ENCODE measurements at regions of chr5 and their contacts with region 1.

Region 1: GRCh38 chr5:52948418-52949076 is 40.6 kb upstream of the ITGA2 start:
- DNase-seq: peak; percentile 63 to 82 (median 70)
- ATAC-seq: peak; percentile 99
- H3K4me3 ChIP-seq: no peak overlapping the region
- H3K27ac ChIP-seq: no peak overlapping the region
- H3K4me1 ChIP-seq: no peaks in the 10 kb centered on the region
- H3K27me3 ChIP-seq: no peaks in the 10 kb centered on the region
- CTCF ChIP-seq: peak; percentile 47 to 90 (median 81)
- POLR2A ChIP-seq: no peak

Region 2: GRCh38 chr5:53041071-53041692 is 92.6 kb after region 1 on chr5:
- intact Hi-C with region 1: no loop called
- DNase-seq: no peak
- ATAC-seq: no peak
- H3K4me3 ChIP-seq: no peak overlapping the region
- H3K27ac ChIP-seq: no peak overlapping the region
- H3K4me1 ChIP-seq: peaks cover 10% of the 10 kb centered on the region
- H3K27me3 ChIP-seq: no peaks in the 10 kb centered on the region
- CTCF ChIP-seq: no peak
- POLR2A ChIP-seq: no peak

Region 3: DNA sequence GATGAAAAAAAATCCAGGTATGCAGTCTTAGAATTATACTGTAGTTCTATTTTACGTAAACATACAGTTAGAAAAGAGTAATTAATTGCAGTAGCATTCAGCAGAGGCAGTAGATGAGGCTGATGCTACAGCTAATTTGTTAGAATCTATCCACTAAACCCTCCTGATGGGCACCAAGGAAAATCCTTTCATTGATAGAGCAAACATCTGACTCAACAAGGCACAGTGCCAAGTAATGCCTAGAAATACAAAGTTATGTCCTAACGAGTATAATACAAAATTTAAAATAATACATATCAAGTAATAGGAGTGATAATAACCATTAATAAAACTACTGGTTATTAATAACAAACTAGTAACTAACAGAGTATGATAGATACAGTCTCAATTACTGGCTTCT is 152.1 kb after region 1 on chr5:
- intact Hi-C with region 1: loop called (anchors 5 kb)
- DNase-seq: no peak
- ATAC-seq: no peak
- H3K4me3 ChIP-seq: no peak overlapping the region
- H3K27ac ChIP-seq: no peak overlapping the region
- H3K4me1 ChIP-seq: no peaks in the 10 kb centered on the region
- H3K27me3 ChIP-seq: no peaks in the 10 kb centered on the region
- CTCF ChIP-seq: no peak
- POLR2A ChIP-seq: no peak

Region 4: GRCh38 chr5:53114988-53115387 is 166.4 kb after region 1 on chr5:
- intact Hi-C with region 1: no loop called
- DNase-seq: no peak
- ATAC-seq: no peak
- H3K4me3 ChIP-seq: no peak overlapping the region
- H3K27ac ChIP-seq: no peak overlapping the region
- H3K4me1 ChIP-seq: peaks cover 12% of the 10 kb centered on the region
- H3K27me3 ChIP-seq: no peaks in the 10 kb centered on the region
- CTCF ChIP-seq: no peak
- POLR2A ChIP-seq: no peak